Posterior vena cava (tissue), 2 donors: ENCODE measurements at regions of chr11 and their contacts with region 1.

Region 1: GRCh38 chr11:92376146-92376599 is 151.6 kb downstream of the FAT3 start:
- DNase-seq: no peak

Region 2: DNA sequence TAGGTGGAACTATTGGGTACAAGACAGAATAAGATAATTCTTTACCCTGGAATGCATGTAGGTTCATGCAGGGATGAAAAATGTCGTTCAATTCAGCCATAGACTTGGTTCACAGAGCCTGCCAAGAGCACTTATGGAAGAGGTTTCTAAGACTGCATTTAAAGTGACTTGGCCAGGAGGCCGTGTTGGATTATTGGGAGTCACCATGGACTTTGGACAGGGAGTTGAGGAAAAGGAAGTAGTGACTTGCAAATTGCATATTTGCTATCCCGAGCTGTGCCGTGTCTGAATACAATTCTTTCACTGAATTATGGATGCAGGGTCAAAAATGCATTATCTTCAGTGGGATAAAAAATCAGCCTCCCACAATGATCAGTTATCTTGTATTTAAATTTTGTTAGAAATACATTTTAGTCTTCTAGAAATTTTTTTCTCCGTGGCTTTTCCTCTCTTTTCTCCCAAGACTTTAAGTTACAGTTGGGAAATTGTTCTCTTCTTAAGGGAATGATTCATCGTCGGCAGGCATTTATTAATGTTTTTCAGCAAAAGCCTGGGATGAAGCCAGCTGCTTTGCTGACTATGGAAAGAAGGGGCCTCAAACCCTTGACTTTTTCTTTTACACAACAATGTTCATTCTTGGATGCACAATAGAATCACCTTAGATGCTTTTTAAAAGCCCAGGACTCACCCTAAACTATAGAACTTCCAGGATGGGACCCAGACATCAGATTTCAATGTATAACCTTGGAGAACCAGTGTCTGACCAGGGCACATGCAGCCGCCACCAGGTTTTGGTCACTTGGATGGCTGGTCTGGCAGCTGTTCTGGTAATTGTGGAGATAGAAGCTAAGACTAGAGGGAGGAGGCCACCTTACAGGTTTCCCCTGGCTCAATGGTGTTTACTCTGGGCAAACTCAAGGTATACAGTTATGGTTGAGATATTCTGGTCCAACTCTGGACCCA is 80.7 kb before region 1 on chr11:
- intact Hi-C with region 1: loop called in 1 of 2 experiments (anchors 10 kb)
- DNase-seq: no peak

Region 3: GRCh38 chr11:92413757-92414513 is 37.8 kb after region 1 on chr11:
- intact Hi-C with region 1: no loop called
- DNase-seq: no peak

Region 4: DNA sequence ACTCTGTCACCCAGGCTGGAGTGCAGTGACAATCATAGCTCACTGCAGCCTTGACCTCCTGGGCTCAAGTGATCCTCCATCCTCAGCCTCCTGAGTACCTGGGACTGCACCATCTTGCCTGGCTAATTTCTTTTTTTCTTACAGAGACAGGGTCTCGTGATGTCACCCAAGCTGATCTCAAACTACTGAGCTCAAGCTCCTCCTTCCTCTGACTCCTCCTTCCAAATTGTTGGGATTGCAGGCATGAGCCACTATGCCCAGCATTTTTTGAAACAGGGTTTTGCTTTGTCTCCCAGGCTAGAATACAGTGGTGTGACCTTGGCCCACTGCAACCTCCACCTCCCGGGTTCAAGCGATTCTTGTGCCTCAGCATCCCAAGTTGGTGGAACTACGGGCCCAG is 235.0 kb after region 1 on chr11:
- intact Hi-C with region 1: no loop called
- DNase-seq: no peak

Region 5: DNA sequence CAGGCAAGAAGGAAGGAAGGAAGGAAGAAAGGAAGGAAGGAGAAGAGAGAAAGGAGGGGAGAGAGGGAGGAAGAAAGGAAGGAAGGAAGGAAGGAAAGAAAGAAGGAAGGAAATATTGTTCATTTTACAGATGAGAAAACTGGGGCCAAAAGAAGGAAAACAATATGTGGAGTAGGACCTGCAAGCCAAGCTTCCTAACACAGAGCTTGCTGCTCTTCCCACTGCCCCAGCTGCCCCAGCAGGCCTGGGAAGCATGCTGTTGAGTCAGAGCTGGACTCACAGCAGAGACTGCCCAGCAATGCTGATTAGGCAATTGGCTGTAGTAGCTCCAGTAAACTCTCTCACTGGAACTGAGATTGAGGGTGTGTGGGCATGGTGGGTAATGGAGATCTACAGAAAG is 1209.6 kb after region 1 on chr11:
- intact Hi-C with region 1: no loop called
- DNase-seq: no peak